Activated B cell treated with CpG ODN at 0.5 μM for 24 hours (primary cell): ENCODE measurements at regions of chr7 and their contacts with region 1.

Region 1: GRCh38 chr7:66114793-66115649 is at the start of gene CRCP:
- DNase-seq: peak; percentile 85
- ATAC-seq: peak; percentile 91
- H3K4me3 Mint-ChIP-seq: peak within 1 kb of the TSS; percentile 95
- H3K27ac Mint-ChIP-seq: peak within 1 kb of the TSS; percentile 95
- H3K4me1 Mint-ChIP-seq: peaks cover 44% of the 10 kb centered on the region
- H3K27me3 Mint-ChIP-seq: no peaks in the 10 kb centered on the region
- CTCF ChIP-seq: no peak
- total RNA-seq, gene CRCP: 40.8 and 42.5 TPM in 2 replicates

Region 2: GRCh38 chr7:66043681-66044497 is 71.1 kb before region 1 on chr7:
- CTCF ChIA-PET with region 1: no interaction called
- POLR2A ChIA-PET with region 1: no interaction called
- intact Hi-C with region 1: no loop called
- DNase-seq: peak; percentile 16
- ATAC-seq: peak; percentile 62
- H3K4me3 Mint-ChIP-seq: peak overlapping the region; percentile 85
- H3K27ac Mint-ChIP-seq: no peak overlapping the region
- H3K4me1 Mint-ChIP-seq: peaks cover 8% of the 10 kb centered on the region
- H3K27me3 Mint-ChIP-seq: peaks cover 19% of the 10 kb centered on the region
- CTCF ChIP-seq: no peak

Region 3: GRCh38 chr7:66099616-66100474 is 15.2 kb before region 1 on chr7:
- CTCF ChIA-PET with region 1: no interaction called
- POLR2A ChIA-PET with region 1: interaction called, 3 read pairs
- intact Hi-C with region 1: loop called (anchors 2 kb)
- DNase-seq: no peak
- ATAC-seq: peak; percentile 61
- H3K4me3 Mint-ChIP-seq: peak overlapping the region; percentile 69
- H3K27ac Mint-ChIP-seq: peak overlapping the region; percentile 10
- H3K4me1 Mint-ChIP-seq: peaks cover 12% of the 10 kb centered on the region
- H3K27me3 Mint-ChIP-seq: no peaks in the 10 kb centered on the region
- CTCF ChIP-seq: no peak